IMR-90 (cell line): ENCODE measurements at regions of chr6 and their contacts with region 1.

Region 1: DNA sequence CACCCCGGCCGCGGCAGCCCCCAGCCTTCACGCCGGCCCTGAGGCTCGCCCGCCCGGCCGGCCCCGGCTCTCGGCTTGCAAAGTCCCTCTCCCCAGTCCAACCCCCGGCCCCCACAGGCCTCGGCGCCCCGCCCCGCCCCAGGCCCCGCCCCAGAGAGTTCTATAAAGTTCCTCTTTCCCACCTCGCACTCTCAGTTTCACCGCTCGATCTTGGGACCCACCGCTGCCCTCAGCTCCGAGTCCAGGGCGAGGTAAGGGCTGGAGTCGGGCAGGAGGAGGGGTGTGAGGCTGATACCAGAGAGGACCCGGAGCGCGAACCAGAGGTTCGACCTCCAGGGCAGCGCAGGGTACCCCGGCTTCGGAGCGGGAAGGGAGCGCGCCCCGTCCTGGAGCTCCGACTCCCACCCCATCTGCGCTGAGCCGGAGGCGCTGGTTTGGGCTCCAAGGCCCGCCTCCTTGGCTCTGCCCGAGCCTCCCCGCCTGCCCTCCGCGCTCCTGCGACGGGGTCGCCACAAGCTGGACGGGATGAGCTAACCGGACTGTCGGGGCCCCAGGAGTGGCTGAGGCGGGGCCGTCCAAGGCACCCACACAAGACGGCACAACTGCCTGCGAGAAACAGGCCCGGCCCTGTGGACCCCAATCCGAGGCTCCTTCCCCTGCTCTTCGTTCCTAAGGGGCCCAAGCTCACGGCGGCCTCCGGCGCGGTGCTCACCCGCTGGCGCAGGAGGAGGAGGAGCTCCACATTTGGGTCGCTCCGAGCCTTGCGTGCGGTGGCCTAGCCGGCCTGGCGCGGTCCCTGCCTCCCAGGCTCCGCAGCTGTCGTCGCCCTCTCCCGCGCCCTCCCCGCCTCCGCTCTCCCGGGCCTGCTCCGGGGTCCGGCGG is at the start of gene IRF4:
- DNase-seq: no peak
- ATAC-seq: 0 out of 2 replicates have a peak, but pooled peaks have one; percentile 24
- H3K4me3 ChIP-seq: no peak within 1 kb of the TSS; the same call in 1 of the 2 replicates
- H3K27ac ChIP-seq: no peak within 1 kb of the TSS
- H3K4me1 ChIP-seq: 0 out of 2 replicates have a peak, but pooled peaks cover 1% of the 10 kb centered on the region
- H3K27me3 ChIP-seq: peaks cover 77% of the 10 kb centered on the region
- CTCF ChIP-seq: no peak
- POLR2A ChIP-seq: no peak
- RAD21 ChIP-seq: no peak
- total RNA-seq, gene IRF4: not detected in 2 replicates

Region 2: DNA sequence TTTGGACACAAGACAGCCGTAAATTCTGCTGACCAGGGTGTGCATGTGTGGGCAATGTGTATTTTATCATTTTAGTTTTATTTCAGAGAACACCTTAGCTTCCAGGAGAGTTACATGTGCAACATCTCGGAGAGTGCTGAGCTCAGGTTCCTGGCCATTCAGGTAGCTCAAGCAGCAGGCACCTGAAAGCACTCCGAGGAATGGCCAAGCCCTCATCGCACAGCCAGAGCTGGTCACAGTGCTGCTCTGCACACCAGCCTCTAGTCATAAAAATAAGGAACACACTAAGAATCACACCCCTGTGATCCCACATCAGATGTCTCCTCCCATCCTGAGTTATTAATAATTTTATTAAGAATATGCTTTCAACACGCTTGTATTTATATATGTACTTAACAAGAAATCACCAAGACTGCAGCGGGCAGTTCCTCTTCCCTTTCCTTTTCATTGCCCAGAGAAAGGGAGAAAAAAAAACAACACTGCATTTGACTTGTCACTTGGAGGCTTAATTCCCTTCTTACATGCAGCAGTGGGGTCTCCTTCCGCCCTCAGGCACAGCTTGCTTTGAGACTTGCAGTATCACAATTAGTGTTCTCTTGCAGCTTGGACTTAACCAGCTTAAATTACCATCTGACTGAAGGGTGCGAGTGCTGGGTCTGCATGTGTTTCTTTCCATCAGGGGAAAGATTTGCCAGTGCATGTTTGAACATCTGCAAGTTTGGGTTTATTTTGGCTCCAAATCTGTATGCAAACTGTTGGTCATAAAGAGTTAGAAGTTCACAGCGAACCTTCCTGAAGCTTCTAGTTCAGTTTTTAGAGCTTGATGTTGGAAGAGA is 36.2 kb before region 1 on chr6:
- CTCF ChIA-PET with region 1: no interaction called
- POLR2A ChIA-PET with region 1: no interaction called
- dilution Hi-C with region 1: no loop called
- in situ Hi-C with region 1: no loop called
- intact Hi-C with region 1: loop called (anchors 2 kb)
- DNase-seq: no peak
- ATAC-seq: no peak
- H3K4me3 ChIP-seq: no peak overlapping the region
- H3K27ac ChIP-seq: no peak overlapping the region
- H3K4me1 ChIP-seq: no peaks in the 10 kb centered on the region
- H3K27me3 ChIP-seq: no peaks in the 10 kb centered on the region
- CTCF ChIP-seq: no peak
- POLR2A ChIP-seq: no peak
- RAD21 ChIP-seq: no peak